Motor neuron (in vitro differentiated cells): ENCODE measurements at regions of chr5 and their contacts with region 1.

Region 1: DNA sequence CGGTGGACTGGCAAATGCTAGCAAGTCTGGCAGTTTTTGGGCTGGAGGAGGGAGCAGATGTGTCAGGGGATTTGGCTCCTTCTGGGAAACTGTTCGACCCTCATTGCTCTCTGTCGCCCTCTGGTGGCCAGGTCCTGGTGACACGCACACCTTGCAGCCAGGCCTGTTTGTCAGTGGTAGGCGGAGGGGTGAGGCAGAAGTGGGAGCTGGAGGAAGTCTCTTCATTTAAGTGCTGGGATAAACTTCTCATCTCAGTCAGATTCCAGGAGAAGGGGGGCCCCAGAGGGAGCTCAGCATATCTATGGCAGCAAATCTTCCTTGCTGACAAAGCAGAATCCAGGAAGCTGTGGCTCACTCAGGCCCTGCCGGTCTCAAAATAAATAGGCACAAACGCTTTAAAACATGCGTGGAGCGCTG is 326.5 kb downstream of the ZSWIM6 start:
- ATAC-seq: peak; percentile 54 to 96 (median 74)
- H3K4me3 ChIP-seq: no peak overlapping the region
- H3K27ac ChIP-seq: peak overlapping the region in 1 of 2 donors; percentile 6
- H3K4me1 ChIP-seq: peaks cover 27 to 34% of the 10 kb centered on the region in 2 donors

Region 2: GRCh38 chr5:61817472-61818326 is 159.1 kb after region 1 on chr5:
- in situ Hi-C with region 1: loop called in 1 of 9 experiments (anchors 25 kb)
- ATAC-seq: peak; percentile 91 to 97 (median 94)
- H3K4me3 ChIP-seq: no peak overlapping the region
- H3K27ac ChIP-seq: no peak overlapping the region
- H3K4me1 ChIP-seq: peaks cover 12 to 32% of the 10 kb centered on the region in 2 donors

Region 3: GRCh38 chr5:61933787-61934626 is 275.4 kb after region 1 on chr5:
- in situ Hi-C with region 1: no loop called
- ATAC-seq: peak in 6 of 8 experiments; percentile 55 to 90 (median 78)
- H3K4me3 ChIP-seq: no peak overlapping the region
- H3K27ac ChIP-seq: no peak overlapping the region
- H3K4me1 ChIP-seq: no peaks in the 10 kb centered on the region